Caco-2 (cell line): ENCODE measurements at regions of chr10 and their contacts with region 1.

Region 1: GRCh38 chr10:96831867-96832720 is at the start of gene LCOR:
- DNase-seq: peak; percentile 88 to 93
- H3K4me3 ChIP-seq: peak within 1 kb of the TSS; percentile 98
- H3K4me3 Mint-ChIP-seq: peak within 1 kb of the TSS; percentile 95
- H3K27ac Mint-ChIP-seq: peak within 1 kb of the TSS; percentile 94
- H3K4me1 ChIP-seq: peaks cover 35% of the 10 kb centered on the region
- H3K4me1 Mint-ChIP-seq: peaks cover 23% of the 10 kb centered on the region
- H3K27me3 ChIP-seq: no peaks in the 10 kb centered on the region
- H3K27me3 Mint-ChIP-seq: no peaks in the 10 kb centered on the region
- CTCF ChIP-seq: no peak
- total RNA-seq, gene LCOR: 46.7 and 51.8 TPM in 2 replicates

Region 2: DNA sequence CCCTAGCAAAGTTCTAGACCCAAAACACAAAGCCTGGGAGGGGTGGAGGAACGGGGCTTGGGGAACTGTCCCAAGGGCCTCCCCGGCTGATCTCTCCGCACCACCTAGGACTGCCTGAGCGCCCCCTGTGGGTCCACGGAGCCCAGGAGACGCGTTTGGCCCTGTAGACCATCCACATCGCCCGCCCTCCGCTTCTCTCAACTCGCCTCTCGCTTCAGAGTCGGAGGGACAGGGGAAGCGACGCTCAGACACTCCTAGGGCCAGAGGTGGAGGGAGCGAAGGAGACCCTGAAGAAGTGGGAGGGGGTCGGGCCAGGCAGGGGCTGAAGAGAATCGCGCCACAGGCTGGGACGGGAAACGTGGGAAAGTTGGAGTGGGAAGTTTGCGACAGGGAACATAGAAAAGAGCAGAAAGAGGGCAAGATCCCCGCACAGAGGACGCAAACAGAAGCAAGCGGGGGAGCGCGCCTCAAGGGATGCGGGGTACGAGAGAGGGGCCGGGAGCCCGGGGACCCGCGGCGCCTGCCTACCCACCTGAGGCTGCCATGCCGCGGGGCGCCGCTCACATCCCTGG is 112.2 kb before region 1 on chr10:
- CTCF ChIA-PET with region 1: no interaction called
- POLR2A ChIA-PET with region 1: no interaction called
- intact Hi-C with region 1: loop called (anchors 5 kb)
- DNase-seq: peak; percentile 63 to 73
- H3K4me3 ChIP-seq: peak overlapping the region; percentile 54
- H3K4me3 Mint-ChIP-seq: peak overlapping the region; percentile 84
- H3K27ac Mint-ChIP-seq: no peak overlapping the region
- H3K4me1 ChIP-seq: peaks cover 13% of the 10 kb centered on the region; the same call in 1 of the 2 replicates
- H3K4me1 Mint-ChIP-seq: no peaks in the 10 kb centered on the region
- H3K27me3 ChIP-seq: peaks cover 5% of the 10 kb centered on the region
- H3K27me3 Mint-ChIP-seq: peaks cover 19% of the 10 kb centered on the region
- CTCF ChIP-seq: peak; percentile 28 to 54

Region 3: DNA sequence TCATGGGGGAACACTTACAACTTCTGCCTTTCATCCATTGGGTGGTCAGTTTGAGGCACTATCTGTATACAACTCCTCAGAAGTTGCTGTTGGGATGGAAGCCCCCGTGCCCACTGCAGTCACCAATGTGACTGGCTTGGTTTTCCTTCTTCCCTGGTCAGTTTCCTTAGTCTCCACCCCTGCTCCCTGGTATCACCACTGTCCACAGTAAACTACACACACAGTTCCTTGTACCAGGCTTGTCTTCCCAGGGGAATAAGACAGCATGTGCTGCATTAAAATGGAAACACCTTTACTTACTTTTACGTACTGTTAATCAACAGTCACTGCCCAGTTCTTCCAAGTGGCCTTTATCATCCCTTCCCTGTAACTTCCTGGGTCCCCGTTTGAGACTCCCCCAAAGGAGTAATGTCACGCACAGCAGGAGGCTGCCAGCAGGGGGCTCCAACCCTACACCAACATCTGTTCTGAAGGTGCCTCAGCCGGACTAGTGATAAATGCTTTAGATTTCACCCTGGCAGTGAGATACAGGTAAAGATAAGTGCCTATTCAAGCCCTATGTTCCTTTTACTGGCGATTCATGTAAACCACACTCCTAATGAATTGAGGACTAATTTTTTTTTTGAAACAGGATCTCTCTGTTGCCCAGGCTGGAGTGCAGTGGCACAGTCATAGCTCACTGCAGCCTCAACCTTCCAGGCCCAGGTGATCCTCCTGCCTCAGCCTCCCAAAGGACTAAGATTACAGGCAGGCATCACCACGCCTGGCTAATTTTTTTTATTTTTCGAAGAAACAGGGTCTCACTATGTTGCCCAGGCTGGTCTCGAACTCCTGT is 66.5 kb before region 1 on chr10:
- CTCF ChIA-PET with region 1: no interaction called
- POLR2A ChIA-PET with region 1: interaction called, 4 read pairs
- intact Hi-C with region 1: loop called (anchors 1 kb)
- DNase-seq: peak; percentile 83 to 86
- H3K4me3 ChIP-seq: no peak overlapping the region
- H3K4me3 Mint-ChIP-seq: no peak overlapping the region
- H3K27ac Mint-ChIP-seq: no peak overlapping the region
- H3K4me1 ChIP-seq: peaks cover 9% of the 10 kb centered on the region
- H3K4me1 Mint-ChIP-seq: peaks cover 7% of the 10 kb centered on the region
- H3K27me3 ChIP-seq: no peaks in the 10 kb centered on the region
- H3K27me3 Mint-ChIP-seq: no peaks in the 10 kb centered on the region
- CTCF ChIP-seq: peak; percentile 94 to 96

Region 4: GRCh38 chr10:96863922-96864543 is 31.9 kb after region 1 on chr10:
- CTCF ChIA-PET with region 1: interaction called, 4 read pairs
- POLR2A ChIA-PET with region 1: no interaction called
- intact Hi-C with region 1: loop called (anchors 1 kb)
- DNase-seq: peak in 1 of 2 experiments; percentile 66
- H3K4me3 ChIP-seq: no peak overlapping the region
- H3K4me3 Mint-ChIP-seq: peak overlapping the region; percentile 64
- H3K27ac Mint-ChIP-seq: peak overlapping the region; percentile 94
- H3K4me1 ChIP-seq: peaks cover 20% of the 10 kb centered on the region
- H3K4me1 Mint-ChIP-seq: peaks cover 39% of the 10 kb centered on the region
- H3K27me3 ChIP-seq: no peaks in the 10 kb centered on the region
- H3K27me3 Mint-ChIP-seq: no peaks in the 10 kb centered on the region
- CTCF ChIP-seq: no peak